ENCODE measurements at regions of chr19 and their contacts with region 1.

Region 1: DNA sequence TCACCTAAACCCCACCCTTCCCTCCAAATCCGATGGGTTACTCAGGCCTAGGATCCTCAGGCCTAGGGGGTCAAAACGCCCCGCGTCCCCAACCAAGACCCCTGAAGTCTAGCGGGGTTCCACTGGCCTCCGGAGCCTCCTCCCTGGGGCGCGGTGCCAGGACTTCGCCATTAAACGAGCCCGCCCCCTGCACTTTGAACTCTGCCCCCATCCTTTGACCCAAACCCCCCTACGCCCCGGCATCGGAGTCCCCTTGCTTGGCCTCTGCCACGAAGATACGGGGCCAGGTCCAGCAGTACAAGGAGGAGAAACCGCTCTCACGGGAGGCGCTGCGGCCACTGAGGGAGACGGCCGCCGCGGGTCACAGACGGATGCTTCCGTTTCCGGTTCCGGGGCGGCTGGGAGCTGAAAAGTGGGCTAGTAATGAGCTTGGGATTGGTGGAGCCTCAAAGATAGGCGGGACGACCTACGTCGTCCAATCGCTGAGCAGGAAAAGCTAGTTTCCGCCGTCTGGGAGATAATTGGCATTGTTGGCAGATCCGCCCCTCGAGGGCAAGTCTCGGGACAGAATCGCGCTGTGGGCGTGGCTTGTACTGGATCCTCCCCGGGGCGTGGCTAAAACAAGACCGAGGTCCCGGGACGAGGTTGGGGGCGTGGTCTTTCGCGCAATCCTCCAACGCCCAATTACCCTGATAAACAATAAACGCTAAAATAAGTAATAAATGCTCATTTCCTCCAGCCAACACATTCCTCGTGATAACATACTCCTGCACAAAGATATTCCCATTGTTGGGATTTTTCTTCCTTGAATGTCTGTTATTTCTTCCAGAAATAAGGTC is 5.7 kb upstream of the ZNF77 start:
- DNase-seq: peak; percentile 100
- H3K4me3 Mint-ChIP-seq: peak overlapping the region; percentile 94
- H3K27ac Mint-ChIP-seq: peak overlapping the region; percentile 94
- H3K4me1 Mint-ChIP-seq: peaks cover 38% of the 10 kb centered on the region
- H3K27me3 Mint-ChIP-seq: no peaks in the 10 kb centered on the region

Region 2: GRCh38 chr19:2962045-2962561 is 11.6 kb after region 1 on chr19:
- CTCF ChIA-PET with region 1: interaction called, 11 read pairs
- DNase-seq: peak; percentile 63
- H3K4me3 Mint-ChIP-seq: peak overlapping the region; percentile 26
- H3K27ac Mint-ChIP-seq: peak overlapping the region; percentile 83
- H3K4me1 Mint-ChIP-seq: peaks cover 5% of the 10 kb centered on the region
- H3K27me3 Mint-ChIP-seq: peaks cover 5% of the 10 kb centered on the region

Region 3: DNA sequence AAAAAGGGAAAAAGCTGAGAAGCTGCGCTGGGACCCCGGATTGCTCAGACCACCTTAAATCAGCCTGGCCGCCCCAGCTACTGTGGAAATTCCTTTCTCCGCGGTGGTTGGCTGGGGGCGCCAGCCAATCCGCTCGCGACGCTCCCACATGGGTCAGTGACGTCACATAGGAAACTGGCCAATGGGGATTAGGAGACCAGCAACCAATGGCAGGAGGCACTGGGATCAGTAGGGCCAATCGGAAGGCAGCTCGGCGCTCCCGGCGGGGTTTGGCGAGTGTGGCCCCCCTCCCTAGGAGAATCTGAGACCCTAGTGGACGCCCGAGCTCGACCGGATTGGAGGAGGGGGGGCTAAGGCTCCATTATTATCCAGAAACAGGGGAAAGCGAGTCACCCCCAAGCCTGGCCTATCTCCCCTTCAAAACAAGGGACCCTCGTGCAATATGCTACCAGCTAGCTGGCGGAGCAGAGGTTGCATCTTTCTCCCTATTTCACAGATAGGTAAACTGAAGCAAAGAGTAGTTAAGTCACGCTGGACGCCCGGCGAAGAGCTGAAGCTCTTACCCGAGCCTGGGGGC is 85.1 kb after region 1 on chr19:
- CTCF ChIA-PET with region 1: interaction called, 12 read pairs
- DNase-seq: peak; percentile 97
- H3K4me3 Mint-ChIP-seq: peak overlapping the region; percentile 75
- H3K27ac Mint-ChIP-seq: peak overlapping the region; percentile 96
- H3K4me1 Mint-ChIP-seq: peaks cover 26% of the 10 kb centered on the region
- H3K27me3 Mint-ChIP-seq: peaks cover 58% of the 10 kb centered on the region

Measured in activated naive CD4-positive, alpha-beta T cell treated with anti-CD3 and anti-CD28 coated beads, Interleukin-2, amount 10 ng/mL, durations not matched to agents 7 days and 5 days (primary cell).